ENCODE measurements at regions of chr22 and their contacts with region 1.

Region 1: DNA sequence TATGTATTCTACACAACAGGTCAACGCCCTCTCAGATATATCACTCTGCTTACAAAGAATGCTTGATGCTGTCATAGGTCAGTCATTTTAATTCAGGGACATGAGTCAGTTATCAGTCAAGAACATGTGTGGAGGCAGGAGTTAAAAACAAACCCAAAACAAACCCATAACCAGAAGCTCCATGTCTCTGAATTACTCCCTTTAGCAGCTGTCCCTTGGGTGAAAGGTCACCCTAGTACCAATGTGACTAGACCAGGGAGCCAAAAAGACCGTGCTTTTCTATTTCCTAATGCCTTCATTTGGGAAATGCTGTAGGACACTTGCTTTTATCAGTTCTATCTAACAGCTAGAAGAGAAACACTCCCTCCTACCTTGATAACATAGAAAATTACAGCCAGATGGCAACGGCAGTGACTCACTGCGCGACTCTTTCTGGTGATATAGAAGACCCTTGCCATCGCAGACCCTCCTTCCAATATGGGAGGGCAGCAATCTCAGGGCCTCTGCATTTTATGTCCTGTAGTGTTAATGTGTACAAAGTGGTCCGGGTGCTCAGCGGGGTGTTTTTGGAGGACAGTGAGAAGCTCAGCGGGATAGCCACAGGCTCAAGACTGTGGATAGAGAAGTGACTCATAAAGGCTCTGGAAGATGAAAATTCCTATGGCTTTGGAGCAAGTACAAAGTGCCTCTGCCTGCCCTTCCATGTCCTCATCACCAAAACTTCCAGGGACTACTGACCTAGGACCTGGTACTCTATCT is 24.8 kb downstream of the APOL5 start:
- DNase-seq: no peak
- H3K4me3 ChIP-seq: no peak overlapping the region
- H3K27ac ChIP-seq: peak overlapping the region in 1 of 4 donors; percentile 26
- H3K4me1 ChIP-seq: peaks cover 27 to 48% (median 37%) of the 10 kb centered on the region in 4 donors
- H3K27me3 ChIP-seq: no peaks in the 10 kb centered on the region
- CTCF ChIP-seq: no peak
- EP300 ChIP-seq: no peak
- POLR2A ChIP-seq: no peak

Region 2: DNA sequence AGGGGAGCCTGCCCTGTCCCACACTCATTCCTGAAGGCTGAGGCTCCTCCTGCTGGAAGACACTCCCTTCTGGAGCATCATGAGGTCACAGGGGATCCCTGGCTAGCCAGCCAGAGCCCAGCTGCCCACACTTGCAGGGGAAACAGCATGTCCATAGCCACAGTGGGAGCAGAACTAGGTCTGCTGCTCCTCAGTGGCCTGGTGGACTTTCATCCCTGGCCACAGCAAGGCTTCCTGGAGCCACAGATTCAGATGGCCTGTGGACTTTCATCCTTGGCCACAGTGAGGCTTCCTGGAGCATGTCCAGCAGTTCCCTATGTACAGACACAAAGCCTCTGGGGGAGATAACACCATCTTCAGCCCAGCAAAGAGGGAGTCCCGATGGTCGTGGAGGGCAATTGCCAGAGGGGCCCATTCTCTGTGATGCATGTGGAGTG is 100.2 kb before region 1 on chr22:
- intact Hi-C with region 1: loop called (anchors 5 kb)
- DNase-seq: no peak
- H3K4me3 ChIP-seq: no peak overlapping the region
- H3K27ac ChIP-seq: no peak overlapping the region
- H3K4me1 ChIP-seq: peaks cover 39 to 43% (median 40%) of the 10 kb centered on the region in 4 donors
- H3K27me3 ChIP-seq: no peaks in the 10 kb centered on the region
- CTCF ChIP-seq: no peak
- EP300 ChIP-seq: no peak
- POLR2A ChIP-seq: no peak

Region 3: GRCh38 chr22:35705141-35705540 is 37.4 kb before region 1 on chr22:
- intact Hi-C with region 1: no loop called
- DNase-seq: no peak
- H3K4me3 ChIP-seq: no peak overlapping the region
- H3K27ac ChIP-seq: no peak overlapping the region
- H3K4me1 ChIP-seq: no peaks in the 10 kb centered on the region
- H3K27me3 ChIP-seq: no peaks in the 10 kb centered on the region
- CTCF ChIP-seq: no peak
- EP300 ChIP-seq: no peak
- POLR2A ChIP-seq: no peak

Region 4: DNA sequence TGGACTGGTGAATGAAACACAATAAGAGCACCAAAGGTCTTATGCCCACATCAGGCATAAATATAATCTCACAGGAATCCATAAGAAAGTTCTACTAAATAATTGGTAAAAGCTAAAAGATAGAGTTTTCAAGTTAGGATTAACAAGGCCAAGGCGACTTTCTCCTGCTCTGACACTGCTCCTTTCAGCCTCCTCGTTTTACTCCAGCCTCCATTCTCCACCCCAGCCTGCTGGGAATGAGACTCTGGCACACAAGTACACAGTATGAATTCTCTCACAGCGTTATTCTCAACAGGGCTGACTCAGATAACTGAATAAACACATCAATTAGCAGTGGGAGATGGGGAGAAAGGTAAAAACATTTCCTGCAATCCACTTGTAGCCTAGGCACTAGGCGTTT is 70.1 kb after region 1 on chr22:
- intact Hi-C with region 1: no loop called
- DNase-seq: no peak
- H3K4me3 ChIP-seq: no peak overlapping the region
- H3K27ac ChIP-seq: no peak overlapping the region
- H3K4me1 ChIP-seq: peaks cover 5 to 33% (median 29%) of the 10 kb centered on the region in 4 donors
- H3K27me3 ChIP-seq: no peaks in the 10 kb centered on the region
- CTCF ChIP-seq: no peak
- EP300 ChIP-seq: no peak
- POLR2A ChIP-seq: no peak

Region 5: GRCh38 chr22:35995772-35996171 is 253.3 kb after region 1 on chr22:
- intact Hi-C with region 1: no loop called
- DNase-seq: peak; percentile 94
- H3K4me3 ChIP-seq: no peak overlapping the region
- H3K27ac ChIP-seq: peak overlapping the region; percentile 68 to 79 (median 76)
- H3K4me1 ChIP-seq: peaks cover 28 to 74% (median 67%) of the 10 kb centered on the region in 4 donors
- H3K27me3 ChIP-seq: no peaks in the 10 kb centered on the region
- CTCF ChIP-seq: no peak
- EP300 ChIP-seq: no peak
- POLR2A ChIP-seq: no peak